Caco-2 (cell line): ENCODE measurements at regions of chr20 and their contacts with region 1.

Region 1: DNA sequence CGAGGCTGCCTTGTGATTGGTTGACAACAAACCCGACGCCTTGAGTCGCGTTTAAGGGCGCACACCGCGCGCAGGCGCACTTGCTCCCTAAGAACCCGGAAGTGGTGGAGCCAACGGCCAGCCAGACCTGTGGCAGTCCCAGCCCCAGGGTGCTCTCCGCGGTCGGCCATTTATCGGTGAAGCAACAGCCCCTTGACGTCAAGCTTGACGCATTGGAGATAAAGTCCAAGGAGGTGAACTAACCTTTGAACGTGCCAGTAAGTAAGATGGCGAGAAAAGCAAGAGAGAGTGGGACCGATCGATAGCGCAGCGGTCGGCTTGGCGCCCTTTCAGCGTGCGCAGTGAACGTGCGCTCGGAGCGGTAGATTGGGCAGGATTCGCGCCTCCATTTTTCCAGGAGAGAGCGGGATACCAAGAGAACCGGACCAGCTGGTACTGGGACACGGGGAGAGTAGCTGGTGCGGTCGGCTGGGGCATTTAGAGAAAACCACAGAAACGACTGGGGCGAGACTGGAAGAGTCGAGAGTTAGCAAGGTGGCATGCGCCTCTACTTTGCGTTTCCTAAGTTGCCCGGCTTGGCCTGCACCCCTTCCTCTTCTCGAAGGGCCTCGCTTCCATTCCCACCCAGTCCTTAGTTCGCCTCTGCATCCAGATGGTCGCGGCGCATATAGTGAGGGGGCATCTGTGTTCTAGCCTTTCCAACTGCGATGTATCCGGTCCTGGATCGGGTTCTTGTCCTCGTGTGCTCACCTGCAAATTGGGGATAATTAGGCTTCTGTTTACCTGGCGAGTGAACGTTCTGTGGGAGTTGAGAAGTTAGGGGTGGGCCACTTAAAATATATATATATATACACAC is at the start of gene CSTF1:
- DNase-seq: peak; percentile 100
- H3K4me3 ChIP-seq: peak within 1 kb of the TSS; percentile 80
- H3K4me3 Mint-ChIP-seq: no peak within 1 kb of the TSS
- H3K27ac Mint-ChIP-seq: no peak within 1 kb of the TSS
- H3K4me1 ChIP-seq: peaks cover 13% of the 10 kb centered on the region
- H3K4me1 Mint-ChIP-seq: peaks cover 17% of the 10 kb centered on the region
- H3K27me3 ChIP-seq: no peaks in the 10 kb centered on the region
- H3K27me3 Mint-ChIP-seq: no peaks in the 10 kb centered on the region
- CTCF ChIP-seq: no peak
- total RNA-seq, gene CSTF1: 97.0 and 101 TPM in 2 replicates

Region 2: DNA sequence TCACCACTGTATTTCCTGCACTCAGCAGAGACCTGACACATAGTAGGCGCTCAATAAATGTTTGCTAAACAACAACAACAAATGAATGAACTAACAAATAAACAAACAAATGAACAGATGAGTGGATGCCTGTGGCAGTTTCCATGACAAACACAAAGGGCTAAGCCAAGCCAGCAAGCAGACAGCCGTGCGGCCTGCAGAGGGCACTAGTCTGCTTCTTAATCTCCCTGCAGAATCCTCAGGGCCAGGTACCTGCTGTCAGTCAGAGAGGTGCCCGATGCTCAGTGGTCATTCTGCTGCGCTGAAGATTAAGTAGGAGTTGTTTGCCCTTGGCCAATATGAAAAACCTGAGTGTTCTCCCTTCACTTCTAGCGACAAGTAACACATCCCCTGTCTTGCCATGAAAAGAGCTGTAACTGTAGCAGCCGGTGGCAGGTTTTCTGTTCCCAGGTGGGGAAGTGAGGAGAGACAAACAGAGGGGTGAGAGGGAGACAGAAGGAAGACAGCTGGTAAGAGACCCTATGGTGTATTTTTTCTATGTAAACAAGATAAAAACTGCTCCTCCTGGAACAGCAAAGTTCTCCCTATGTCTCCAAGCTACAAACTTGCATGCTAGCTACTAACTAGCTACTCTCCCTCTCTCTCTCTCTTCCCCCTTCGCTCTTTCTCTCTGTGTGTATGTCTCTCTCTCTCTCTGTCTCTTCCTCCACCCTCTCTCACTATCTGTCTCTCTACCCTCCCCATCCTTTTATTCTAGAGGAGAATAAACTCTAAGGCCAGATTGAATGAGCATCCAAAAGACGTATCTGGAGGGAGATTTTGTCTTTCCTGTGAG is 144.3 kb before region 1 on chr20 and contains the start of gene MC3R:
- CTCF ChIA-PET with region 1: no interaction called
- POLR2A ChIA-PET with region 1: interaction called, 3 read pairs
- intact Hi-C with region 1: loop called (anchors 1 kb)
- DNase-seq: peak; percentile 86
- H3K4me3 ChIP-seq: no peak within 1 kb of the TSS
- H3K4me3 Mint-ChIP-seq: no peak within 1 kb of the TSS
- H3K27ac Mint-ChIP-seq: no peak within 1 kb of the TSS
- H3K4me1 ChIP-seq: no peaks in the 10 kb centered on the region
- H3K4me1 Mint-ChIP-seq: no peaks in the 10 kb centered on the region
- H3K27me3 ChIP-seq: no peaks in the 10 kb centered on the region
- H3K27me3 Mint-ChIP-seq: peaks cover 33% of the 10 kb centered on the region
- CTCF ChIP-seq: peak; percentile 92 to 99
- total RNA-seq, gene MC3R: not detected in 2 replicates

Region 3: GRCh38 chr20:56268536-56269232 is 123.8 kb before region 1 on chr20:
- CTCF ChIA-PET with region 1: no interaction called
- POLR2A ChIA-PET with region 1: no interaction called
- intact Hi-C with region 1: no loop called
- DNase-seq: no peak
- H3K4me3 ChIP-seq: no peak overlapping the region
- H3K4me3 Mint-ChIP-seq: no peak overlapping the region
- H3K27ac Mint-ChIP-seq: no peak overlapping the region
- H3K4me1 ChIP-seq: no peaks in the 10 kb centered on the region
- H3K4me1 Mint-ChIP-seq: no peaks in the 10 kb centered on the region
- H3K27me3 ChIP-seq: no peaks in the 10 kb centered on the region
- H3K27me3 Mint-ChIP-seq: peaks cover 10% of the 10 kb centered on the region
- CTCF ChIP-seq: no peak

Region 4: DNA sequence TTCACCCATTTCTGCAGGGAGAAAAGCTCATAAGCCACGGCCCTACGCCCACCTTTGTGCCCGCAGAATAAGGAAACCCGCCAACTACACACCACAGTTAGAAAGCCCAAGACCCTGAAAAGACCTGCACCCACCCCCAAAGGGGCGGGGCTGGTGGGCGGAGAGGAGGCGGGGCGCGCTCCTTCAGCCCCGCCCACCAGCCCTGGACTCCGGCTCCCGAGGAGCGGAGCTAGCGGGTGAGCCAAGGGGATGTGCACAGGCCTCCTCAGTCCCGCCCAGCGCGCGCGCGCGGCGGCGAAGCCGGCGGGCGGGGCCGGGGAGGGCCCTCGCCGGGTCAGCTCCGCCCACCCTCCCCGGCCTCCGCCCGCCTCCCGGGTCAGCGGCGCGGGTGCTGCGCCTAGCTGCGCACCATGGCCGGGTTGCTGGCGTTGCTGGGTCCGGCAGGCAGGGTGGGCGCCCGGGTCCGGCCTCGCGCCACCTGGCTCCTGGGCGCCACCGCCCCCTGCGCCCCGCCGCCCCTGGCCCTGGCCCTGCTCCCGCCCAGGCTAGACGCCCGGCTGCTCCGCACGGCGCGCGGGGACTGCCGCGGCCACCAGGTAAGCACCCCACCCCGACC is 33.8 kb before region 1 on chr20 and contains the start of gene FAM210B:
- CTCF ChIA-PET with region 1: interaction called, 5 read pairs
- POLR2A ChIA-PET with region 1: interaction called, 55 read pairs
- intact Hi-C with region 1: loop called (anchors 1 kb)
- DNase-seq: peak; percentile 96 to 97
- H3K4me3 ChIP-seq: peak within 1 kb of the TSS; percentile 86
- H3K4me3 Mint-ChIP-seq: peak within 1 kb of the TSS; percentile 87
- H3K27ac Mint-ChIP-seq: peak within 1 kb of the TSS; percentile 11
- H3K4me1 ChIP-seq: no peaks in the 10 kb centered on the region
- H3K4me1 Mint-ChIP-seq: no peaks in the 10 kb centered on the region
- H3K27me3 ChIP-seq: no peaks in the 10 kb centered on the region
- H3K27me3 Mint-ChIP-seq: peaks cover 3% of the 10 kb centered on the region
- CTCF ChIP-seq: no peak
- total RNA-seq, gene FAM210B: 20.5 and 21.1 TPM in 2 replicates

Region 5: GRCh38 chr20:56411759-56412472 is 19.4 kb after region 1 on chr20 and contains the start of gene CASS4:
- CTCF ChIA-PET with region 1: interaction called, 15 read pairs
- POLR2A ChIA-PET with region 1: interaction called, 9 read pairs
- intact Hi-C with region 1: no loop called
- DNase-seq: peak; percentile 39 to 60
- H3K4me3 ChIP-seq: no peak within 1 kb of the TSS
- H3K4me3 Mint-ChIP-seq: peak within 1 kb of the TSS; percentile 0
- H3K27ac Mint-ChIP-seq: peak within 1 kb of the TSS; percentile 20
- H3K4me1 ChIP-seq: peaks cover 19% of the 10 kb centered on the region
- H3K4me1 Mint-ChIP-seq: peaks cover 15% of the 10 kb centered on the region
- H3K27me3 ChIP-seq: no peaks in the 10 kb centered on the region
- H3K27me3 Mint-ChIP-seq: no peaks in the 10 kb centered on the region
- CTCF ChIP-seq: no peak
- total RNA-seq, gene CASS4: 0.64 and 0.67 TPM in 2 replicates

Region 6: GRCh38 chr20:56504373-56505005 is 112.0 kb after region 1 on chr20:
- CTCF ChIA-PET with region 1: no interaction called
- POLR2A ChIA-PET with region 1: no interaction called
- intact Hi-C with region 1: no loop called
- DNase-seq: peak in 1 of 2 experiments; percentile 46
- H3K4me3 ChIP-seq: no peak overlapping the region
- H3K4me3 Mint-ChIP-seq: no peak overlapping the region
- H3K27ac Mint-ChIP-seq: no peak overlapping the region
- H3K4me1 ChIP-seq: no peaks in the 10 kb centered on the region
- H3K4me1 Mint-ChIP-seq: no peaks in the 10 kb centered on the region
- H3K27me3 ChIP-seq: no peaks in the 10 kb centered on the region
- H3K27me3 Mint-ChIP-seq: no peaks in the 10 kb centered on the region
- CTCF ChIP-seq: peak; percentile 61 to 86

Region 7: DNA sequence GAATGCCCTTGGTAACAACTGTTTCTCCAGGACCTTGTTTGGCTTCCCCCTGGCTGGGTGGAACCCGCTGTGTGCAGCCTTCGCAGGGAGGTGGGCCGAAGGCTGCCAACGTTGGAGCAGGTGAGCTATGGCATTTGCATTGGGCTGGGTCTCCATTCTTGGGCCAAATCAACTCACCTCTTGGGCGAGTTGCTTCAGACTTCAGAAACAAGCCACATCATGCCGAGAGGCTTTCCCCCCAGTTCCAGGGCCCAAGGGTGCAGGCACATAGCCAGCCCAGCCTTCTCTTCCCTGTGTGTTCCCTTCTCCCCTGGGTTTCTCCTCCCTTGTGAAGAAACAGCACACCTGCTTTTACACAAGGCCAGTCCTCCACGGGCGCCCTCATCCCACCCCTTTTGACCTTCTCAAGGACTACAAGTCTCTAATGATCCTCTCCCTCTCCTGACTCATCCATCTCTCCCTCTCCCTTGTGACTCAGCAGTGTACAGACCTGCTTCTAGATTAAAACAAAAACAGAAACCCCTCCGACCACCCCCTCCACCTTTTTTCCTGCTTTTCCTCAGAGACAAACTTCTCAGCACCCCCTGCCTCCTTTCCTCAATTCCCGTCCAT is 182.1 kb after region 1 on chr20:
- CTCF ChIA-PET with region 1: no interaction called
- POLR2A ChIA-PET with region 1: interaction called, 7 read pairs
- intact Hi-C with region 1: loop called (anchors 2 kb)
- DNase-seq: no peak
- H3K4me3 ChIP-seq: no peak overlapping the region
- H3K4me3 Mint-ChIP-seq: no peak overlapping the region
- H3K27ac Mint-ChIP-seq: peak overlapping the region; percentile 4
- H3K4me1 ChIP-seq: peaks cover 12% of the 10 kb centered on the region
- H3K4me1 Mint-ChIP-seq: peaks cover 19% of the 10 kb centered on the region
- H3K27me3 ChIP-seq: no peaks in the 10 kb centered on the region
- H3K27me3 Mint-ChIP-seq: no peaks in the 10 kb centered on the region
- CTCF ChIP-seq: no peak